ENCODE measurements at regions of chr7 and their contacts with region 1.

Region 1: DNA sequence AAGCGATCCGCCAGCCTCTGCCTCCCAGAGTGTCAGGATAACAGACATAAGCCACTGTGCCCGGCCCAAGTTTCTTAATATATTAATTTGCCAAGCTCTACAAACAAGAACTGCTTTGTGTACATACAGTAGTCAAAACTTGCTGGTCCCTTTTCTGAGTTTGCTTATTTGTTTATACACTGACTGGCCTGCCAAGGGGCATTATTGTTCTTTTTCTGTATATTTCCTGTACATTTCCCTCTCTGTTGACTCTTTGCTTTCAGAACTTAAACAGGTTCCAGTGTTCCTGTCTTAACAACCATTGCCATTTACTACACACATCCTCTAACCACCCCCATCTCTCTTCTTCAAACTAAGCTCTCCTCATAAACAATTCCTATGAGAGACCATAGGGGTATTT is 61.5 kb upstream of the RPA3 start:
- DNase-seq: no peak
- ATAC-seq: no peak
- H3K4me3 Mint-ChIP-seq: no peak overlapping the region
- H3K27ac Mint-ChIP-seq: no peak overlapping the region
- H3K4me1 Mint-ChIP-seq: peaks cover 7% of the 10 kb centered on the region
- H3K27me3 Mint-ChIP-seq: no peaks in the 10 kb centered on the region

Region 2: DNA sequence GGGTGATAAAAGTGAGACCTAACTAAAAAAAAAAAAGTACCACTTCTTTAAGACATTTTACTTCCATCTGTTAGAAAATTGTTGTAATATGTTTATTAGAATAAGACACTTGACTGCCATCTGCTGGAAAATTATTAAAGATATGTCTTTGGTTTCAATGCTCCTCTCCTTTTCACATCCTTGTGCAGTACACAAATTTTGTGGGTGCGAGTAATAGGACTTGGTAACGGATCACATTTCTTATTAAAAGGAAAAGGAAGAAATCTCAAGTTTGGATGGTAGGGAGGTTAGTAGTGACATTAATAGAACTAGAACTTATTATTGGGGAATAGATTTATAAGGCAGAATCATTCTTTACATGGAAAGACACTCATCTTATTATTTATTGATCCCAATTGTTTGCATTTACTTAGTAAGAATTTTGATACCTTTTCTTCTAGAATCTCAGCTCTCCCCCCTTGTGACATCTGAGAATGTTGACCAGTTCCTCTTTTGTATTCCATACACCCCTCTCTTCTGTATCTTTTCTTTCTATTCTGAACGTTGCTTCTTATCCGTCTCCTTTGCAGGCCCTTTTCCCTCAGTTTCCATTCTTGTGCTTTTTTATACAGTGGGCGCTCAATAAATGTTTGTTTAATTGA is 18.4 kb before region 1 on chr7:
- CTCF ChIA-PET with region 1: interaction called, 10 read pairs
- POLR2A ChIA-PET with region 1: no interaction called
- DNase-seq: no peak
- ATAC-seq: peak; percentile 35
- H3K4me3 Mint-ChIP-seq: peak overlapping the region; percentile 83
- H3K27ac Mint-ChIP-seq: peak overlapping the region; percentile 90
- H3K4me1 Mint-ChIP-seq: peaks cover 28% of the 10 kb centered on the region
- H3K27me3 Mint-ChIP-seq: no peaks in the 10 kb centered on the region

Measured in activated CD8-positive, alpha-beta T cell treated with anti-CD3 and anti-CD28 coated beads, Interleukin-2, amount 10 ng/mL, durations not matched to agents 7 days and 5 days (primary cell).